Natural killer cell (primary cell): ENCODE measurements at regions of chr15 and their contacts with region 1.

Region 1: DNA sequence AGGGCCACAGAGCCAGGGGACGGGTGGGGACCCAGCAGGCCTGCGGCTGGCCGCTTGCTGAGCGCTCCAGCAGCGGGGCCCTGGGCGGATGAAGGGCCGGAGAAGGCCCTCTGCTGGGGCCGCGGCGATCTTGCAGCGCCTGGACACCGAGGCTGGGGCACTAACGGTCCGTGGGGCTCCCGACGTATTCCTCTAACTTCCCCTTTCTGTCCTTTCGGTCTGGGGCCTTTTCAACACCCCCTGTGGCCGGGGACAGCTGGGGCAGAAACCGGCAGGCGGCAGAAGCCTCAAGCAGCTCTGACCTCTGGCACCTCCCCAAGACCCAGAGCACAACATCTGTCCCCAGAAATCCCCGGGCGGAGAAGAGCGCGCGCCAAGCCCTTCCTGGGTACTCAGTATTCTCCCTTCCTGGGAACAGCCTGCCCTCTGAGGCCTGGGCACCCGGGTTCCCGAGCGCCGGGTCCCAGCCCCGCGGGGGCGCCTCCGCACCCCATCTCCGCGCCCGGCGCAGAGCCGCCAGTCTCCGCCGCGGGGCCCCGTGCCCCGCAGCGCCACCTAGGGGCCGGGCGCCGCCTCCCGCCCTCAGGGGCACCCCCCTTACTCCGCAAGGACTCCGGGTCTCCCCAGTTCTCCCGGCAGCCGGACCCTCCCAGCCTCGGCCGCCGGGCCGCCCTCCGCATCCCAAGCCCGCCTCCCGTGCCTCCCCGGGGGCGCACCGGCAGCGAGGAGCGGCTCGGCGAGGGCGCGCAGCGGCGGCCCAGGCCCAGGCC is 582 bp upstream of the SLCO3A1 start:
- DNase-seq: peak; percentile 78 to 89
- ATAC-seq: peak; percentile 59 to 83 (median 68)
- H3K4me3 ChIP-seq: peak overlapping the region; percentile 69
- H3K4me3 Mint-ChIP-seq: peak overlapping the region; percentile 86
- H3K27ac ChIP-seq: peak overlapping the region; percentile 87
- H3K27ac Mint-ChIP-seq: peak overlapping the region; percentile 77 to 88
- H3K4me1 ChIP-seq: peaks cover 54% of the 10 kb centered on the region
- H3K4me1 Mint-ChIP-seq: peaks cover 58 to 62% of the 10 kb centered on the region in 2 donors
- H3K27me3 ChIP-seq: no peaks in the 10 kb centered on the region
- H3K27me3 Mint-ChIP-seq: no peaks in the 10 kb centered on the region
- CTCF ChIP-seq: peak; percentile 88

Region 2: GRCh38 chr15:90400406-90401314 is 1452.3 kb before region 1 on chr15:
- intact Hi-C with region 1: loop called (anchors 10 kb)
- DNase-seq: peak; percentile 49 to 94
- ATAC-seq: peak; percentile 79 to 96 (median 96)
- H3K4me3 ChIP-seq: peak overlapping the region; percentile 30
- H3K4me3 Mint-ChIP-seq: peak overlapping the region; percentile 85
- H3K27ac ChIP-seq: peak overlapping the region; percentile 99
- H3K27ac Mint-ChIP-seq: peak overlapping the region; percentile 94 to 97
- H3K4me1 ChIP-seq: peaks cover 49% of the 10 kb centered on the region
- H3K4me1 Mint-ChIP-seq: peaks cover 70 to 79% of the 10 kb centered on the region in 2 donors
- H3K27me3 ChIP-seq: no peaks in the 10 kb centered on the region
- H3K27me3 Mint-ChIP-seq: no peaks in the 10 kb centered on the region
- CTCF ChIP-seq: no peak

Region 3: DNA sequence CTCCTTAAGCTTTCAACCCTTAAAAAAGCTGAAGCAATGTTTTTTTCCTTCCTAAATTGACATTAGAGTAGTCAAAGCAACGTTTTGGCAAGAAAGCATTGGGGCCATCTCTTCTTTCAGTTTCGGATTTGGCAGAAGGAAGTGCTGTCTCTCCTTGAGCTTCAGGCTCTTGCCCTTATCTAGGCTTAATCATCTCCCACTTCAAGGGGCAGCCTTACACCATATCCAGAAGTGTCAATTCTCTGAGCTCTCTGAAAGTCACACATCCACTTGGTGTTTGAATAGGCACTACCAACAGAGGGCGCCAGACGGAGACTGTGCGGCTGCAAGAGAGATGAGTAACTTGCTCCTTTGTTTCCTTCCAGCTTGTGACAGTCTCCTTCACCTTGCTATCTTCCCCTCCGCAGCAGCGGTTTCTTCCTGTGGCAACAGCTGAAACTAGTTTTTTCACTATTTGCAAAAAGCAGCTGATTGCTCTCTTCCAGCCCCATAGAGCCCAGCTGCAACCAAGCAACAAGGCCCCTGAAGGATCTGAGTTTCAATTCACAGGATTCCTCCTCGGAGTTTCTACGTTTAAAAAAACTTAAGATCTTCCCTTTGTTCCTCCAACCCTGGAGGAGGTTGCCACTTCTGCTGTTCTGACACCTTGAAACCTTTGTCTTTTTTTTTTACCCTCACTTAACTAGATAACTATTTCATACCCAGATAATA is 146.4 kb before region 1 on chr15:
- intact Hi-C with region 1: loop called (anchors 2 kb)
- DNase-seq: peak; percentile 70 to 91
- ATAC-seq: peak; percentile 96 to 99 (median 98)
- H3K4me3 ChIP-seq: no peak overlapping the region
- H3K4me3 Mint-ChIP-seq: peak overlapping the region; percentile 65
- H3K27ac ChIP-seq: peak overlapping the region; percentile 52
- H3K27ac Mint-ChIP-seq: peak overlapping the region; percentile 82 to 83
- H3K4me1 ChIP-seq: peaks cover 19% of the 10 kb centered on the region
- H3K4me1 Mint-ChIP-seq: peaks cover 22 to 31% of the 10 kb centered on the region in 2 donors
- H3K27me3 ChIP-seq: no peaks in the 10 kb centered on the region
- H3K27me3 Mint-ChIP-seq: peaks cover 0 to 9% of the 10 kb centered on the region in 2 donors
- CTCF ChIP-seq: peak; percentile 85

Region 4: GRCh38 chr15:91921188-91921842 is 68.4 kb after region 1 on chr15:
- intact Hi-C with region 1: no loop called
- DNase-seq: peak in 1 of 2 donors; percentile 60
- ATAC-seq: peak; percentile 58 to 88 (median 83)
- H3K4me3 ChIP-seq: no peak overlapping the region
- H3K4me3 Mint-ChIP-seq: no peak overlapping the region
- H3K27ac ChIP-seq: no peak overlapping the region
- H3K27ac Mint-ChIP-seq: peak overlapping the region; percentile 48 to 64
- H3K4me1 ChIP-seq: peaks cover 12% of the 10 kb centered on the region
- H3K4me1 Mint-ChIP-seq: peaks cover 72 to 74% of the 10 kb centered on the region in 2 donors
- H3K27me3 ChIP-seq: no peaks in the 10 kb centered on the region
- H3K27me3 Mint-ChIP-seq: no peaks in the 10 kb centered on the region
- CTCF ChIP-seq: no peak

Region 5: GRCh38 chr15:92077353-92078085 is 224.6 kb after region 1 on chr15:
- intact Hi-C with region 1: loop called (anchors 5 kb)
- DNase-seq: peak; percentile 32 to 73
- ATAC-seq: peak; percentile 43 to 76 (median 70)
- H3K4me3 ChIP-seq: no peak overlapping the region
- H3K4me3 Mint-ChIP-seq: no peak overlapping the region
- H3K27ac ChIP-seq: no peak overlapping the region
- H3K27ac Mint-ChIP-seq: no peak overlapping the region
- H3K4me1 ChIP-seq: peaks cover 32% of the 10 kb centered on the region
- H3K4me1 Mint-ChIP-seq: peaks cover 39 to 60% of the 10 kb centered on the region in 2 donors
- H3K27me3 ChIP-seq: no peaks in the 10 kb centered on the region
- H3K27me3 Mint-ChIP-seq: no peaks in the 10 kb centered on the region
- CTCF ChIP-seq: peak; percentile 48

Region 6: GRCh38 chr15:92205255-92205739 is 352.4 kb after region 1 on chr15:
- intact Hi-C with region 1: no loop called
- DNase-seq: no peak
- ATAC-seq: no peak
- H3K4me3 ChIP-seq: no peak overlapping the region
- H3K4me3 Mint-ChIP-seq: no peak overlapping the region
- H3K27ac ChIP-seq: no peak overlapping the region
- H3K27ac Mint-ChIP-seq: no peak overlapping the region
- H3K4me1 ChIP-seq: no peaks in the 10 kb centered on the region
- H3K4me1 Mint-ChIP-seq: no peaks in the 10 kb centered on the region
- H3K27me3 ChIP-seq: no peaks in the 10 kb centered on the region
- H3K27me3 Mint-ChIP-seq: peaks cover 18 to 29% of the 10 kb centered on the region in 2 donors
- CTCF ChIP-seq: no peak